ENCODE measurements at regions of chr10 and their contacts with region 1.

Region 1: GRCh38 chr10:14670551-14671240 is 104.0 kb downstream of the FAM107B start:
- DNase-seq: peak; percentile 55 to 80
- ATAC-seq: peak; percentile 86 to 89
- H3K4me3 ChIP-seq: peak overlapping the region; percentile 23
- H3K27ac ChIP-seq: peak overlapping the region; percentile 71 to 87
- H3K4me1 ChIP-seq: peaks cover 52% of the 10 kb centered on the region
- CTCF ChIP-seq: no peak
- EP300 ChIP-seq: peak; percentile 82 to 85; a peak in 3 of 5 replicates
- POLR2A ChIP-seq: no peak
- RAD21 ChIP-seq: peak in 1 of 2 experiments; percentile 48; a peak in 2 of 5 replicates

Region 2: GRCh38 chr10:14653271-14654228 is 17.1 kb before region 1 on chr10:
- CTCF ChIA-PET with region 1: interaction called, 4 read pairs
- POLR2A ChIA-PET with region 1: interaction called, 12 read pairs
- DNase-seq: peak; percentile 86 to 96
- ATAC-seq: peak; percentile 84 to 91
- H3K4me3 ChIP-seq: no peak overlapping the region
- H3K27ac ChIP-seq: peak overlapping the region; percentile 89 to 92
- H3K4me1 ChIP-seq: peaks cover 63% of the 10 kb centered on the region
- CTCF ChIP-seq: no peak
- EP300 ChIP-seq: peak; percentile 68 to 88; a peak in 3 of 5 replicates
- POLR2A ChIP-seq: no peak
- RAD21 ChIP-seq: peak; percentile 16 to 59; a peak in 1 of 5 replicates

Measured in A549 (cell line).